GM10248 (cell line): ENCODE measurements at regions of chr17 and their contacts with region 1.

Region 1: DNA sequence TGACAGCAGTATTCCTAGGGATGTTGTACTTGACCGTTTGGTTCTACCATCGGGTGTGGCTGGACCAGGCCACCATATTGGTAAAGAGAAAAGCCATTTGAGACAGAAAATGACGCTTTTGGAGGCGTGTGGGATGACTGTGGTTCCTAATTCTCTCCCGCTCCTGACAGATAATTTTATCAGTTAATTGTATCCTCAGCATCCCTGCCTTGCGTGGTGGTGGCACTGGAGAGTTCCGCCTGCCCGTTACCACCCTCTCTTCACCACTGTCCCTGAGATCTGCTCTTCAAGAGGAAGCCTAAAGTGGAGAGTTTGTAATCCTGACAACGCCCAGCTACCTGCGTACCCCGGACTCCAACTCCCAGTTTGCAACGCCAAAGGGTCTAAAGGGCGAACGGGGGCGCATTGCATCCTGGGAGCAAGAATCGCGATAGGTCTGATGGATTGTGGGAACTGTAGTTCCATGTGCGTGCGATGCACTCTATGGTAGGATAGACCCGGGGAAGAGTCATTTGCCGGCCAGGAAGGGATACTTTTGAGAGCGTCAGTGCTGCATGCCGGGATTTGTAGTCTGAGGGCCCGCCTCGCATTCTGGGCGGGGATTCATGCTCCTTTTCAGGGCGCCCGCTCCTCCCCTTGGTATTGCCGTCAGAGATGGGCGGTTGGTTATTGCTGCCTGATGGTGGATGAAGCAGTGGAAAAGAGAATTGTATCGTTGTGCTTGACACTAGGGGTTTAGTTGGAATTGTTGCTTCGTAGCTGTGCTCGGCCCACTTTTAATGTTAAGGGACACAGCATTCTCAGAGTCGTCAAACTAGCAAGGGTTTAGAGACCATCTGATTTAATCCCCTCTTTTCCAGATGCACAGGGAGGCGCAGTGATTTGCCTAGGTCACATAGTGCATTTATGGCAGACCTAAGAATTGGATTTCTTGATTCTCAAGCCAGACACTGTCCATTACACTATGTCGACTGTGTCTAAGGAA is 965 bp upstream of the PHF12 start:
- DNase-seq: peak; percentile 92
- CTCF ChIP-seq: no peak

Region 2: GRCh38 chr17:28644985-28645939 is 307.0 kb before region 1 on chr17 and contains the start of gene BLTP2:
- CTCF ChIA-PET with region 1: interaction called, 11 read pairs
- POLR2A ChIA-PET with region 1: no interaction called
- DNase-seq: peak; percentile 99
- CTCF ChIP-seq: no peak

Region 3: DNA sequence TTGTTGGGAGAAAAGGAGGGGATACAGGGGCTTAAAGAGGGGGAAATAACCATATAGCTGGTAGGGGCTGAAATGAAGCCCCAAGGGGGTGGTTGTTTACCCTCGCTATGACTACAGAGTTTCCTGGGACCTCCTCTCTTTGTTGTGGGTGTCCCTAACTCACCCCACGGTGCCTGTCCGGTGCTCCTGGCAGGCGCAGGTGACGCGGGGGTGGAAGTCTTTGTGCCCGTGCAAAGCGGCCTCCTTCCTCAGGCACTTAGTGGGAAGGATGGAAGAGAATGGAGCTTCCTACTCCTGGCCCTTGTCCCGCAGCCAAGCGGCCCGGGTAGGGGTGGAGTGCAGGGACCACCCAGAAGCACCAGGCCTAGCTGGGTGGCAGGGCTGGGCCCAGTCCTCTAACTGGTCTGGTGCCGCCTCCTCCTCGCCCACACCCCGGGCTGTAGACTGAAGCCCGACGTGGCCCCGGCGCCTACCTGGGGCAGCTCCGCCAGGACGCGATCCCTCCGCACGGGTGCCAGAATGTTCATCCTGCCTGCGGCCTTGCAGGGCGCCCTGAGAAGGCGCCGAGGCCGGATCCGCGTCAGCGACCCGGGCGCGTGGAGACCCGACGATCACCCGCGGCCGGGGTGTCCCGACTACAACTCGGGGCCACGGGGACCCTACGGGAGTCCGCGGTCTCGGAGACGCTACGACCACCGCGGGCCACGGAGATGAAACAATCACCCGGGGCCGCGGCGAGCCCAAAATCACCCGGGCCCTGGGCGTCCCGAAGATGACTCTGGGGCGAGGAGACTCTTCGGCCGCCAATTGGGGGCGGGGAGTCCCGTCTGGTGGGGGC is 235.3 kb before region 1 on chr17:
- CTCF ChIA-PET with region 1: interaction called, 5 read pairs
- POLR2A ChIA-PET with region 1: interaction called, 14 read pairs
- DNase-seq: no peak
- CTCF ChIP-seq: no peak

Region 4: GRCh38 chr17:28937044-28937729 is 15.1 kb before region 1 on chr17:
- CTCF ChIA-PET with region 1: interaction called, 25 read pairs
- POLR2A ChIA-PET with region 1: no interaction called
- DNase-seq: no peak
- CTCF ChIP-seq: no peak

Region 5: GRCh38 chr17:28967221-28968140 is 15.2 kb after region 1 on chr17:
- CTCF ChIA-PET with region 1: interaction called, 62 read pairs
- POLR2A ChIA-PET with region 1: interaction called, 9 read pairs
- DNase-seq: no peak
- CTCF ChIP-seq: no peak

Region 6: DNA sequence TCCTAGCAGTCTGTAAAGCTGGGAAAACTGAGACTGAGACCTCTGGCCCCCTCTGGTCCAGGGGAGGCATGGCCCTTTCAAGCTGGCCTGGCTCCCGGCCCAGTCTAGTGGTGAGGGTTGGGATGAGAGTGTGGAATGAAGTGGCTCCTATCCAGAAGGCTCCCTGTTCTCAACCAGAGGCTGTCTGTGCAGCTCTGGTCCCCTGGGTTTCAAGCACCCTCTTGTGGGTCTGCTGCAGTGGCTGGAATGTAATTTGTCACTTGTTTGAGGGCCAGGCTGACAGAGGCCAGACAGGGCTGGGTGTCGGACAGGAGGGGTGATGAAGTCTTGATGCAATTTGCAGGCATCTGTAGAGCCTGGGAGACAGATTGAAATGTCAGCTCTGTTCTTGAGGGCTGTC is 21.1 kb after region 1 on chr17:
- CTCF ChIA-PET with region 1: interaction called, 21 read pairs
- POLR2A ChIA-PET with region 1: no interaction called
- DNase-seq: no peak
- CTCF ChIP-seq: no peak

Region 7: GRCh38 chr17:29155227-29155965 is 203.1 kb after region 1 on chr17:
- CTCF ChIA-PET with region 1: no interaction called
- POLR2A ChIA-PET with region 1: no interaction called
- DNase-seq: peak; percentile 71
- CTCF ChIP-seq: no peak